Activated T-helper 2 cell treated with anti-CD3 and anti-CD28 coated beads, Interferon-gamma antibody, Interleukin-2, Interleukin-4, amounts not matched to agents 10 μg/mL and 5 μg/mL and 100 μg/mL, durations not matched to agents 14 hours and 24 hours and 36 hours (primary cell): ENCODE measurements at regions of chr19 and their contacts with region 1.

Region 1: DNA sequence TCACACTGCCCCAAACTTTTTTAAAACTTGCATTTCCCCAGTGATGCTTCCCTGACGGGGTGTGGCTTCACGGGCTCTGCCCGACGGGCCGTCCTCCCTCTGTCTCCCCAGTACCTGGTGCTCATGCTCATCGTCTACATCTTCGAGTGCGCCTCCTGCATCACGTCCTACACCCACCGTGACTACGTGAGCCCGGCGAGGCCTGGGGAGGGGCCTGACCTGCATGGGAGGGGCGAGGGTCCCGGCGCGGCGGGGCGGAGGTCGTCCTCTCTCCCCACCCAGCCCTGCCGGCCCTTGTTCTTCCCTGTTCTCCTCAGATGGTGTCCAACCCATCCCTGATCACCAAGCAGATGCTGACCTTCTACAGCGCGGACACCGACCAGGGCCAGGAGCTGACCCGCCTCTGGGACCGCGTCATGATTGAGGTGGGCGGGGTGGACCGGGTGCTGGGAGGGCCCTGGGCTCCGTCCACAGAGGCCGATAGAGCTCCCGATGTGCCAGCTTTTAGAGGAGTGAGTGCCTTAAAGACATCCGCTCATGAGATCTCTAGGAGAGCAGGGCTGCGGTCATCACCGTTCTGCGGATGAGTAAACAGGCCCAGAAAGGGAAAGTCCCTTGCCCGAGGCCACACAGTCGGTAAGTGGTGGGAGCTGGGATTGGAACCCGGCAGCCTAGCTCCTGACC is 6.9 kb downstream of the UPK1A start:
- DNase-seq: peak; percentile 43
- H3K4me3 Mint-ChIP-seq: peak overlapping the region; percentile 83
- H3K27ac Mint-ChIP-seq: peak overlapping the region; percentile 63
- H3K4me1 Mint-ChIP-seq: peaks cover 13% of the 10 kb centered on the region
- H3K27me3 Mint-ChIP-seq: peaks cover 36% of the 10 kb centered on the region

Region 2: DNA sequence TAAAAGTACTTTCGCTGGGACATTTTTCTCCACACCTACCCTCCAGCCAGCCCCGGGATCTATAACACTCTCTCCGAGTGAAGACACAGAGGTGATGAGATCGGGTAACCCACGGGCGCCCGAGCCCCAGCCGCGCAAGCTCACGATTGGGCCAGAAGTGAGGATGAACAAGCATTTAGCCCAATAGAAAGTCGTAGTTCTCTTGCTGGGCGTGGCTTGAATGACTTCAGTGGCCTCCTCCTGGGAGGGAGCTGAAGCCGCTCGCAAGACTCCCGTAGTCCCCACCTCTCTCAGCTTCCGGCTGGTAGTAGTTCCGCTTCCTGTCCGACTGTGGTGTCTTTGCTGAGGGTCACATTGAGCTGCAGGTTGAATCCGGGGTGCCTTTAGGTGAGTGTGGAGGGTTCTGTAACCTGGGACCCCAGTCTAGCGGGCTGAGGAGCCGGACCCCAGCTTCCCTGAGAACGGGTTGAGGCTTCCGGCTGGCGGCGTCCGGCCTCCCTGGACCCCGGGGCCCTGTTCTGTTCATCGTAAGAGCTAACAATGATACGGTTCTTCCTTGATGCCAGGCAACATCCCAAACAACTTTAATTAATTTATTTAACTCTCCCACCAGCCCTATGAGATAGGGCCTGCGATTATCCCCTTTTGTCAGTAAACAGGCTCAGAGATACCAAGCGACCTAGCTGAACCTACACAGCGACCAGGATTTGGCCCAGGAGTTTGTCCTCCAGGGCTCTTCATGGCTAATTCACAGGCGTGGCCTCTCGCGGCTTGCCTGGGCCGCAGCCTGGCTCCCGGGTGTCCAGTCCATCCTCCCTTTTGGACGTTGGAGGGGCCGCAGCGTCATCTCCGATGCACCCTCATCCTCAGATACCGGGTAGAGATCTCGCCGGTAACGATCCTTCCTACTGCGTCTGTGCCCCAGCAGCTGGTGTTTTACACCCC is 25.0 kb before region 1 on chr19 and contains the start of gene COX6B1:
- intact Hi-C with region 1: no loop called
- DNase-seq: peak; percentile 93
- H3K4me3 Mint-ChIP-seq: peak within 1 kb of the TSS; percentile 96
- H3K27ac Mint-ChIP-seq: peak within 1 kb of the TSS; percentile 71
- H3K4me1 Mint-ChIP-seq: peaks cover 17% of the 10 kb centered on the region
- H3K27me3 Mint-ChIP-seq: no peaks in the 10 kb centered on the region
- total RNA-seq, gene COX6B1: 431 and 461 TPM in 2 replicates

Region 3: DNA sequence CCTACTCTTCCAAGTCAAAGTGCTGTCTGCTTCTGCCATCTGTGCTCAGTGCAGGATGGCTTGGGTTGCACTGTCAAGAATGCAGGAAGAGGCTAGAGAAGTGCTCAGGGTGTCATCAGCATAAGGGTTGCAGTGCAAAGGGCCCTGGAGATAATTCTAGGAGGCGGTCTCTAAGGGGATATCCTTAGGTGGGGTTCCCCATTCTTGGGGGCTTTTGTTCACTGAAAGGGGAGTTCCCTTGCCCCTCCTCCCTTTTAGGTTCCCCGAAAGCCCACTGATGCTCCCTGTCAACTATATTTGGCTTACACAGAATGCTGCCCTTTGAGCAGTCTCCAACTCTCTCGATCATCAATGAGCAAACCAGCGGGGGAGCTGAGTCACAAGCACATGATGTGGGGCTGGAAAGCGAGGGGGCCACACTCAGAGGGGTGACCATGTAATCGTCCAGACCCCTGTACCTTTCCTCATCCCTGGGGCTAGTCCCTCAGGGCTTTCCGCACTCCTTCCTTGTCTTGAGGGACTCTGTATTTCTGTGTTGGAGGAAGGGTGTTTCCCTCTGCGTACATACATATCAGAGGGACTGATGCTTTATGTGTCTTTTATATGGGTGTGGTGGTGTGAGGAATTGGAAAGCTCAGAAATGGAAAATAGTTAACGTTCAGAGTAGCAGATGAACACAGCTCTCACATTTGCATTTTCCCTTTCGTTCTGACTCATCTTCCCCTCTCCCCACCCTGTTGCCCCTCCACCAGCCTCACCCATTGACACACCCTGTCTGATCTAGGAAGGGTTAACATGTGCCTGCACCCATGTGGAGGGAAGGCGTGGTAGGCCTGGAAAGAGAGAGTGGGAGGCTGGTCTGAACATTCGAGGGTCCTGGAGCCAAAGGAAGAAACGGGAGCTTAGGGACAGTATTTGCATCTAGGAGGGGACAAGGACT is 37.8 kb after region 1 on chr19:
- intact Hi-C with region 1: loop called (anchors 2 kb)
- DNase-seq: peak; percentile 71
- H3K4me3 Mint-ChIP-seq: peak overlapping the region; percentile 66
- H3K27ac Mint-ChIP-seq: peak overlapping the region; percentile 100
- H3K4me1 Mint-ChIP-seq: peaks cover 40% of the 10 kb centered on the region
- H3K27me3 Mint-ChIP-seq: no peaks in the 10 kb centered on the region